ENCODE measurements at regions of chr3 and their contacts with region 1.

Region 1: DNA sequence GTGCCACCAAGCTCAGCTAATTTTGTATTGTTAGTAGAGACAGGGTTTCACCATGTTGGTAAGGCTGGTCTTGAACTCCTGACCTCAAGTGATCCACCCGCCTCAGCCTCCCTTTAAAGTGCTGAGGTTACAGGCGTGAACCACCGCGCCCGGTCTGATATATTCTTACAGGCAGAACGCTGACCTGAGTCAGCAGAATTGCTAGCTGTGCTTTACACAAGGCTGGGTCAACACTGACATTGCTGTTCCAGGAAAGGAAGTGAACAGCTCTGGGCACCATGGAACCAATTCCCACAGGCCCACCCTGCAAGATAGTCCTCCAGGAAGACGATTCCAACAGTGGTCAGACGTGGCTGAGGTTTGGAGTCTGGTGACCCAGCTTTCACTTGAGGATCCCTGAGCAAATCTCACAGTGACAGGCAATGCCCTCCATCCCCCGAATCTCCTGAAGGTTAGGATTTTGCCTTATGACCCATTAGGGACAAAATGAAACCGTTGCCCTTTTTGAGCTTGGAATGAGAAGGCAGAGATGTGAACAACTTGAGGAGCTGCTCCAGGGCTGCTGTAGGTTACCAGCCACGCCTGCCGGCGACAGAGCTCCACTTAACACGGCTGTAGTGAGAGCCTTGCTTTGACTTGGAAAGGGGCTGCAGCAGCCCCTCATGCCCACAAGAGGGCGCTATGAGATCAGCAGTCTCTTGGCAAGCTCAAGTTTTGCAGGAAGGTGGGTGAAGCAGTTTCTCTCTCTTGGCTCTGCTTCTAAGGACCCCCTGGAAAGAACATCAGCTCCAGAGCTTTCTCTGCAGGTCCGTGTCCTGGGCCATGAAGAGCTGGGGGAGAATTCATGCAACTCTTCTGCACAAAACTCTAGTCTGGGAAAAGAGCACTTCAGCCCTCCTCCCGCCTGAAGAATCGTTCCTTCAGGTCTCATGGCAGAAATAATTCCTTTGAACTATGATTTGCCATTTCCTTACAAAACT is 74.1 kb downstream of the SENP2 start:
- DNase-seq: peak; percentile 65 to 91 (median 83)

Region 2: GRCh38 chr3:185767002-185767688 is 106.9 kb after region 1 on chr3:
- intact Hi-C with region 1: loop called (anchors 5 kb)
- DNase-seq: no peak

Measured in head of caudate nucleus (tissue), 42 donors.